ENCODE measurements at regions of chr13 and their contacts with region 1.

Region 1: GRCh38 chr13:33874873-33875272 is 56.9 kb downstream of the RFC3 start:
- DNase-seq: no peak
- ATAC-seq: no peak
- H3K4me3 ChIP-seq: no peak overlapping the region
- H3K27ac ChIP-seq: peak overlapping the region; percentile 77
- H3K4me1 ChIP-seq: peaks cover 63% of the 10 kb centered on the region
- H3K27me3 ChIP-seq: no peaks in the 10 kb centered on the region; a peak in 1 of 5 replicates
- CTCF ChIP-seq: peak; percentile 43
- EP300 ChIP-seq: no peak
- POLR2A ChIP-seq: no peak
- RAD21 ChIP-seq: no peak

Region 2: GRCh38 chr13:33132644-33133440 is 742.0 kb before region 1 on chr13:
- CTCF ChIA-PET with region 1: no interaction called
- POLR2A ChIA-PET with region 1: no interaction called
- in situ Hi-C with region 1: no loop called
- intact Hi-C with region 1: no loop called
- DNase-seq: no peak
- ATAC-seq: no peak
- H3K4me3 ChIP-seq: no peak overlapping the region
- H3K27ac ChIP-seq: no peak overlapping the region
- H3K4me1 ChIP-seq: peaks cover 20% of the 10 kb centered on the region
- H3K27me3 ChIP-seq: no peaks in the 10 kb centered on the region
- CTCF ChIP-seq: no peak
- EP300 ChIP-seq: no peak
- POLR2A ChIP-seq: no peak
- RAD21 ChIP-seq: no peak

Region 3: GRCh38 chr13:33817901-33818706 is 56.8 kb before region 1 on chr13 and contains the start of gene RFC3:
- CTCF ChIA-PET with region 1: no interaction called
- POLR2A ChIA-PET with region 1: interaction called, 5 read pairs
- in situ Hi-C with region 1: no loop called
- intact Hi-C with region 1: loop called (anchors 5 kb)
- DNase-seq: peak; percentile 90
- ATAC-seq: peak; percentile 97
- H3K4me3 ChIP-seq: peak within 1 kb of the TSS; percentile 65 to 90 (median 77)
- H3K27ac ChIP-seq: peak within 1 kb of the TSS; percentile 77
- H3K4me1 ChIP-seq: peaks cover 57% of the 10 kb centered on the region
- H3K27me3 ChIP-seq: no peaks in the 10 kb centered on the region; a peak in 1 of 5 replicates
- CTCF ChIP-seq: peak; percentile 32; the same call in 1 of the 2 replicates
- EP300 ChIP-seq: peak in 1 of 2 experiments; percentile 20; a peak in 1 of 4 replicates
- POLR2A ChIP-seq: peak; percentile 59 to 62; a peak in 3 of 4 replicates
- RAD21 ChIP-seq: peak; percentile 21; the same call in 1 of the 2 replicates
- total RNA-seq, gene RFC3: 55.7 and 80.1 TPM in 2 replicates

Measured in HepG2 (cell line).